ENCODE measurements at regions of chr15 and their contacts with region 1.

Region 1: DNA sequence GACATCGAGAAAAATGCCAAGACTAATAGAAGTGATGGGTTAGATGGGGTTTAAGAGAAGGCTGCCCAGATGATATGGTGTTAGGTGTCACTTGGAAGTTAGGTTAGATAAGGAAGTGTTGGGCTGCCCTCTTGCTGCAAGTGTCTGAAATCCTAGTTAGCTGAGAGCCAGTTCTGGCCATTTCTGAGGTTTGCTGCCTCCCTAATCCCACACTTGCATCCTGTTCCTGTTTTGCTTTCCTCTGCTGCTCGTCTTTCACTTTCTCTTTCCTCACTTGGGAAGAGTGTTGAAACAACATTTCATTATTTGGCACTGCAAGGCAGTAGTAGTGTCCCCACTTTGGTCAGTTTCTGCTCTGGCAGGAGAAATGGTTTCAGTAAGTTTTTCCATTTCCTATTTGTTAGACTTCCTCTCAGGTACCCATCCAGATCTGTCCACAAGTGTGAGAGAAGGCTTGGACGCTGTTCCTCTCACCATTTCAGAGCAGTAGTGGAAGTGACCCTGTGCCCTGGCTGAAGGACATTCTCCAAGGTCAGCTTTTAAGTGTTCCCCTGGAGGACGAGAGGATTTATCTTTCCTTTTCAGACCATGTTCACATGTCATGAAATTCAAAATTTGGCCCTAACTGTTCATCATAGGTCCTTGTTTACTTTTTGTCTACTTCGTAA is 93.3 kb downstream of the ADAMTSL3 start:
- DNase-seq: peak; percentile 59
- ATAC-seq: peak; percentile 74
- H3K4me3 ChIP-seq: peak overlapping the region; percentile 39; the same call in 1 of the 2 replicates
- H3K27ac ChIP-seq: peak overlapping the region; percentile 98
- H3K4me1 ChIP-seq: peaks cover 21% of the 10 kb centered on the region
- H3K27me3 ChIP-seq: no peaks in the 10 kb centered on the region
- CTCF ChIP-seq: peak; percentile 62

Region 2: DNA sequence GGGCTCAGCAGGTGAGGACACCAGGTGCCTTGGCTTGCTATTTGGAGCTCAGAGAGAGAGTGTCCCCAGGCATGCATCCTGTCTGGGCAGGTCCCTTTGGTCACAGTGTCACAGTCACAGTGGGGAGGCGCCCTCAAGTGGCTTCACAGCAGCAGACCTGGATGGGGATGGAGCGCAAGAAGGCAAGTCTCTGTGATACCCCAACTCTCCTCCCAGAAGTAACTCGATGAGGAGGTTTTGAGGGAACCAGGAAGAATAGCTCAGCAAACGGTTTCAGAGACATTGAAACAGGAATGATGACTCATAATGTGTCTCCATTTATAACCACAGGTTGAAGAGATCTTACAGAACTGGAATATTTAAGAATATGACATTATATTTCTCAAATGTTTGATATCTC is 366.5 kb before region 1 on chr15:
- CTCF ChIA-PET with region 1: no interaction called
- POLR2A ChIA-PET with region 1: no interaction called
- intact Hi-C with region 1: no loop called
- DNase-seq: peak; percentile 78
- ATAC-seq: peak; percentile 44
- H3K4me3 ChIP-seq: no peak overlapping the region
- H3K27ac ChIP-seq: peak overlapping the region; percentile 99
- H3K4me1 ChIP-seq: peaks cover 48% of the 10 kb centered on the region
- H3K27me3 ChIP-seq: no peaks in the 10 kb centered on the region
- CTCF ChIP-seq: peak; percentile 63

Region 3: GRCh38 chr15:83564975-83565532 is 182.1 kb before region 1 on chr15:
- CTCF ChIA-PET with region 1: interaction called, 7 read pairs
- POLR2A ChIA-PET with region 1: no interaction called
- intact Hi-C with region 1: loop called (anchors 1 kb)
- DNase-seq: no peak
- ATAC-seq: no peak
- H3K4me3 ChIP-seq: no peak overlapping the region
- H3K27ac ChIP-seq: no peak overlapping the region
- H3K4me1 ChIP-seq: peaks cover 7% of the 10 kb centered on the region; the same call in 1 of the 2 replicates
- H3K27me3 ChIP-seq: no peaks in the 10 kb centered on the region
- CTCF ChIP-seq: no peak

Region 4: DNA sequence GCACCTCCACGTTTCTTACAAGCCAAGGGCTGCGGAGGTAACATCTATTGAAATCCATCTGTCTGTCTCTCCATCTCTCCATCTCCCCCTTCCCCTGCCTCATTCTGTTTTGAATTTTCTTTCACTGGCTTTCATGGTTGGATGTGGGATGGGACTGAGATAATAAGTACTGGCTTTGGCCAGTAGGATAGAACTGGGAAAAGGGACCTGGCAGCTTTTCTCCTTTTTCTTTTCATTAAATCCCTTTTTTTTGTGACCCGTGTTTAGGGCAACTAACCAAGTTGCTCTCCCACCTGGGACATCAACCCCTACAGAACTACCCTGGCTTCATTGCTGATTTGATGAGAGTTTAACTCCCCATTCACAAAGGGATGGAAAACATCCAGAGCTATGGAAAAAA is 160.1 kb before region 1 on chr15:
- CTCF ChIA-PET with region 1: no interaction called
- POLR2A ChIA-PET with region 1: interaction called, 16 read pairs
- intact Hi-C with region 1: no loop called
- DNase-seq: no peak
- ATAC-seq: no peak
- H3K4me3 ChIP-seq: no peak overlapping the region
- H3K27ac ChIP-seq: no peak overlapping the region
- H3K4me1 ChIP-seq: no peaks in the 10 kb centered on the region
- H3K27me3 ChIP-seq: no peaks in the 10 kb centered on the region
- CTCF ChIP-seq: no peak

Region 5: DNA sequence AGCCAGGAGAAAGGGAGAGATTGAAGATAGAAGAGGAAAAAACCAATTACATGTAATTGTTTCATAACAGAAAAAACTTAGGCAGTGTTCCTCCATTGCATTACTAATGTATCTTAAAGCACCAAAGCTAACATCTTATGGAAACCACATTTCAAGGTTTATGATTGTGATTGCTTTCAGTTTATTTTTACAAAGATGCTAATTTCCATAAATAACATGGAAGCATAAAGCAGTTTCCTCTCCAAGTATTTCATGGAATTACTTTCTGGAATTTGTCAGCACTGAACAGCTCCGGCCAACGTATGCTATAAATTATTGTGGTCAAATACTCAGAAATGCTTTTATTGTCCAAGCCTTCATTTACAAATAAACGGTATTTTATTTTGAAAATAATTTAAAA is 81.7 kb before region 1 on chr15:
- CTCF ChIA-PET with region 1: no interaction called
- POLR2A ChIA-PET with region 1: no interaction called
- intact Hi-C with region 1: no loop called
- DNase-seq: no peak
- ATAC-seq: no peak
- H3K4me3 ChIP-seq: no peak overlapping the region
- H3K27ac ChIP-seq: no peak overlapping the region
- H3K4me1 ChIP-seq: no peaks in the 10 kb centered on the region
- H3K27me3 ChIP-seq: no peaks in the 10 kb centered on the region
- CTCF ChIP-seq: no peak

Region 6: GRCh38 chr15:83734487-83734886 is 12.7 kb before region 1 on chr15:
- CTCF ChIA-PET with region 1: no interaction called
- POLR2A ChIA-PET with region 1: no interaction called
- intact Hi-C with region 1: loop called (anchors 2 kb)
- DNase-seq: peak; percentile 89
- ATAC-seq: peak; percentile 65
- H3K4me3 ChIP-seq: peak overlapping the region; percentile 33; the same call in 1 of the 2 replicates
- H3K27ac ChIP-seq: peak overlapping the region; percentile 83
- H3K4me1 ChIP-seq: peaks cover 36% of the 10 kb centered on the region
- H3K27me3 ChIP-seq: no peaks in the 10 kb centered on the region
- CTCF ChIP-seq: peak; percentile 40

Region 7: DNA sequence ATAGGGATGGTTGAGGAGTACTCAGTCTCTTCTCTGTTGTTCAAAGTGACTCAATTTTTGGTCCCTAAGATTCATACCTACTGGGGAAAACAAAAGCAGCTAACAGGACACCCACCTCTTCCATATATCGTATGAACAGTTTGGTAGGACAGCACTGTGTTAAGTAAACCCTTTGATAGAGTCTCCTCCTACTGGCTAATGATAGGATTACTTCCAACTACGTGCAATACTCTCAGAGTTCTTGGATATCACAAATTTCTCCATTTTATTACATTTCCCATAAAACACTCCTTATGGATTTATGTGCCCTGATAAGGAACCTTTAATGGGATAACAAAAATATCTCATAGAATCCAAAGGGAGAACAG is 288.2 kb after region 1 on chr15:
- CTCF ChIA-PET with region 1: no interaction called
- POLR2A ChIA-PET with region 1: no interaction called
- intact Hi-C with region 1: loop called (anchors 2 kb)
- DNase-seq: peak; percentile 70
- ATAC-seq: peak; percentile 80
- H3K4me3 ChIP-seq: no peak overlapping the region
- H3K27ac ChIP-seq: no peak overlapping the region
- H3K4me1 ChIP-seq: peaks cover 9% of the 10 kb centered on the region
- H3K27me3 ChIP-seq: no peaks in the 10 kb centered on the region
- CTCF ChIP-seq: peak; percentile 67